Aorta (tissue), 5 donors: ENCODE measurements at regions of chr5 and their contacts with region 1.

Region 1: DNA sequence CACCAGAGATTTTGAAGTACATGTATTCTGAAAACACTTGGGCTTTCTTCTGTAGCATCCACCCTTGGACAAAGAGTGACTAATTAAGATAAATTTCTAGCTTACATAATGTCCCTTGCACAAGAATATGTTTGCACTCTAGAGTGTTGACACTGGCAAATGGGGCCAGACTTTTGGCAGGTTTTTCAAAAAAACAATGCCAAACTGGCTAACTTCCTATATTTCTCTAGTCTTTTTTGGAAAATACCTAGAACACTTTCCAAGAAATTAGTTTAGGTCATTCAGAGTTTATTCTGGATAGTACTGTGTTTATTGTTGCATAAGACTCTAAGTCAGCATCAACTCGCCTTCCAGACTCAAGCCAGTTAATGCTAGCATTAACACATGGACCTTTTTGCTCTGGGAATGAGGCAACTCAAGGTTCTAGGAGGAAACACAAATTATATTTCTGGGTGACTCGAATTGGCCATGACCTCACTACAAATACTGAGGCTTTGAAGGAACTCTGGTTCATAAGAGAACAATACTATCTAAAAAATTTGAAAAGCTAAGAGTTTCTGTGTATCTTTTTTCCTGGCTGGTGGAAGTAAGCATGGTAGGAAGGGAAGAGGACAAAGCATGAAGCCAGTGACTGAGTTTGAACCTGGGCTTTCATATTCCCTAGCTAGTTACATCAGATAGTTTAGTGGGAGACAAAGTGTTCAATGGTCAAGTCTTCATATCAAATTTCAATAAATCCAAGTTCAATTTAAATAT is 101.6 kb downstream of the NREP start:
- DNase-seq: no peak
- ATAC-seq: peak; percentile 95
- H3K4me3 ChIP-seq: no peak overlapping the region
- H3K27ac ChIP-seq: no peak overlapping the region
- H3K4me1 ChIP-seq: no peaks in the 10 kb centered on the region
- H3K27me3 ChIP-seq: no peaks in the 10 kb centered on the region

Region 2: DNA sequence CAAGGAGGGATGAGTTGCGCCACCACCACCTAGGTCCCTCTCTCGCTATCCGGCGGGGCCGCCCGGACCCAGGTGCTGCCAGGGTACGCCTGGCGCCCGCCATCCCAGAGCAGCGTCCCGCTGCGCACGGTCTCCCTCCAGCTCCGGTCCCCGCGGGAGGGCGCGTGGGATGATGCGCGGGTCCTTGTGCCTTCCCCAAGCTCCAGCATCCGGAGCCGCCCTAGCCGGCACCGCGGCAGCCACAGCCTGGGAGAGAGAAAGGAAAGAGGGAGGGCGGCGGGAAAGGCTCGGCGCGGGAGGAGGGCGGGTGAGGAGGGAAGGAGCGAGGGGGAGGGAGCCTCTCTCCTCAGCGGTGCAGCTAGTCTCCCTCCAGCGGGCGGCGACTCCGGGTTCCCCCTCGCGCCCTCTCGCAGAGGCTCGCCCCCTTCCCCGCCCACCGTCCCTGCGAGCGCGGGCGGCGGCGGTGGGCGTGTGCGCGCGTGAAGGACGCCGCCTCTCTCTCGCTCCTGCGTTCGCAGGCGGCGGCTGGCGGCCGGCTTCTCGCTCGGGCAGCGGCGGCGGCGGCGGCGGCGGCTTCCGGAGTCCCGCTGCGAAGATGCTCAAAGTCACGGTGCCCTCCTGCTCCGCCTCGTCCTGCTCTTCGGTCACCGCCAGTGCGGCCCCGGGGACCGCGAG is 431.3 kb before region 1 on chr5 and contains the start of gene CAMK4:
- intact Hi-C with region 1: no loop called
- DNase-seq: peak; percentile 67 to 87
- ATAC-seq: peak; percentile 86
- H3K4me3 ChIP-seq: peak within 1 kb of the TSS; percentile 5 to 58
- H3K27ac ChIP-seq: no peak within 1 kb of the TSS
- H3K4me1 ChIP-seq: no peaks in the 10 kb centered on the region
- H3K27me3 ChIP-seq: no peaks in the 10 kb centered on the region
- total RNA-seq, gene CAMK4: 0.62 to 0.90 TPM

Region 3: GRCh38 chr5:111550279-111551020 is 104.9 kb before region 1 on chr5:
- intact Hi-C with region 1: loop called in 1 of 2 experiments (anchors 10 kb)
- DNase-seq: peak; percentile 77 to 84
- ATAC-seq: peak; percentile 93
- H3K4me3 ChIP-seq: no peak overlapping the region
- H3K27ac ChIP-seq: no peak overlapping the region
- H3K4me1 ChIP-seq: no peaks in the 10 kb centered on the region
- H3K27me3 ChIP-seq: no peaks in the 10 kb centered on the region

Region 4: GRCh38 chr5:111735583-111736270 is 80.4 kb after region 1 on chr5:
- intact Hi-C with region 1: loop called (anchors 5 to 10 kb)
- DNase-seq: no peak
- ATAC-seq: no peak
- H3K4me3 ChIP-seq: no peak overlapping the region
- H3K27ac ChIP-seq: no peak overlapping the region
- H3K4me1 ChIP-seq: peaks cover 0 to 6% of the 10 kb centered on the region in 2 donors
- H3K27me3 ChIP-seq: no peaks in the 10 kb centered on the region

Region 5: GRCh38 chr5:111742177-111742994 is 87.0 kb after region 1 on chr5:
- intact Hi-C with region 1: loop called (anchors 5 to 10 kb)
- DNase-seq: no peak
- ATAC-seq: peak; percentile 78
- H3K4me3 ChIP-seq: peak overlapping the region in 1 of 2 donors; percentile 50
- H3K27ac ChIP-seq: peak overlapping the region in 1 of 2 donors; percentile 23
- H3K4me1 ChIP-seq: peaks cover 0 to 9% of the 10 kb centered on the region in 2 donors
- H3K27me3 ChIP-seq: no peaks in the 10 kb centered on the region

Region 6: GRCh38 chr5:111757355-111758283 is 102.3 kb after region 1 on chr5:
- intact Hi-C with region 1: loop called in 1 of 2 experiments (anchors 5 kb)
- DNase-seq: peak; percentile 97
- ATAC-seq: peak; percentile 92
- H3K4me3 ChIP-seq: peak overlapping the region; percentile 62 to 82
- H3K27ac ChIP-seq: peak overlapping the region; percentile 74 to 78
- H3K4me1 ChIP-seq: no peaks in the 10 kb centered on the region
- H3K27me3 ChIP-seq: no peaks in the 10 kb centered on the region

Region 7: GRCh38 chr5:112049738-112050137 is 394.4 kb after region 1 on chr5:
- intact Hi-C with region 1: no loop called
- DNase-seq: no peak
- ATAC-seq: no peak
- H3K4me3 ChIP-seq: no peak overlapping the region
- H3K27ac ChIP-seq: no peak overlapping the region
- H3K4me1 ChIP-seq: no peaks in the 10 kb centered on the region
- H3K27me3 ChIP-seq: no peaks in the 10 kb centered on the region